ENCODE measurements at regions of chr11 and their contacts with region 1.

Region 1: DNA sequence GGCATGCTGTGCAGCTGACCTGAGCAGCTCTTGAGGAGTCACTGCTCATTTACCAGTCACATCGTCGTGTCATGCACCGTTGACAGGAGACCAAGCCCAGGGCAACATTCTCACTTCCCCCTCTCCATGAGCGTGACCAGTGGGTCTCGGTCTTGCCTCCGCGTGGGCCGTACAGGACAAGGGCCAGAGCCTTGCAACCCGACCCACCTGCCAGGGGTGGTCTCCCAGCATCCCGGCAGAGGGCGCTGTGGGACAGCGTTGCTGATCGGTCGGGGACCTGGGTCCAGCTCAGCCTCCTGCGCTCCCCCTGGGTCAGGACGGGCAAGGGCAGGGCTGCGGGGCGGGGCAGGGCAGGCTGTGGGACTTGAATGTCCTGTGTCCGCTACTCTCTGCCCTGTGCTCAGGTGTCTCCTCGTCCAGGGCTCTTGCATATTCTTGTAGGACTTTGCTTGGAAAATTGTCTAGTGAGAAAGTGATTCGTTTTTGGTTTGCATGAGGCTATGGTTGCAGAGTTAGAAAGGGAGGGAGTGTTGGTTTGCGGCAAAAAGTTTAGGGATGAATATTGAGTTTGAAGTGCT is 16.2 kb downstream of the EIF4G2 start:
- DNase-seq: peak; percentile 89
- CTCF ChIP-seq: peak; percentile 99

Region 2: DNA sequence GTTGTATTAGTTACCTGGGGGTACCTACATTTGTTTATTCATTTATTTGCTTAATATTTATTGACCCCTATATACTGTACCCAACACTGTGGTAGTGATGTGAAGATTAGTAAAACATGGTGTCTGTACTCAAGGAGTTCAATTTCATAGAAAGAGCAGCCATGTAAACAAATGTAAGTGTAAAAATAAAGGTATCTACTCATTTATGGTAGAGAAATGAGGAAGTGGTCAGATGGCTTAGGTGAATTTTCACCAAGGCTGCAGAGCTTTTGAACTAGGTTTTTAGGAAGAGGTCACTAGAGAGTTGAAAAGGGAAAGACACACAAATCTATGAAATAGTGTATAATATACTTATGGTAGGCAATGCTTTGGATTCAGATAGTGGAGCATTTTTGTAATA is 30.3 kb before region 1 on chr11:
- CTCF ChIA-PET with region 1: interaction called, 16 read pairs
- POLR2A ChIA-PET with region 1: interaction called, 3 read pairs
- DNase-seq: peak; percentile 53
- CTCF ChIP-seq: no peak

Region 3: DNA sequence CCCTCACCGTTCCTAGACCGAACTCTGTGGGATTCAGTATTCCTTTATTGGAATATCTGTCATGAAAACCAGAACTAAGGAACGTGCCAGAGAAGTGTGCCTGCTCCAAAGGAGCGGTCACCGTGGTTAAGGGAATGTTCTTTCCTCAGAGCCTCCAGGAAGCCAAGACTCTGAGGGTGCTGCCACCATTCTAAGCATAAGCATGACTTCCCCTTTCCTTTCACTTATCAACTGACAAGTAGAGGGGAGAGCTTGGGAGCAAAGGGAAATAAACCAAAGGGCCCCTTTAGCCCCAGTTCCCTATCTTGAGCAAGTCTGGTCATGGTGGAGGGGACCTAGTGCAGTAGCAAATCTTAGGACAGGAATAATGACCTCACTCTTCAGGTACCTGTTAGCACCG is 14.7 kb before region 1 on chr11:
- CTCF ChIA-PET with region 1: interaction called, 53 read pairs
- POLR2A ChIA-PET with region 1: no interaction called
- DNase-seq: no peak
- CTCF ChIP-seq: no peak

Region 4: DNA sequence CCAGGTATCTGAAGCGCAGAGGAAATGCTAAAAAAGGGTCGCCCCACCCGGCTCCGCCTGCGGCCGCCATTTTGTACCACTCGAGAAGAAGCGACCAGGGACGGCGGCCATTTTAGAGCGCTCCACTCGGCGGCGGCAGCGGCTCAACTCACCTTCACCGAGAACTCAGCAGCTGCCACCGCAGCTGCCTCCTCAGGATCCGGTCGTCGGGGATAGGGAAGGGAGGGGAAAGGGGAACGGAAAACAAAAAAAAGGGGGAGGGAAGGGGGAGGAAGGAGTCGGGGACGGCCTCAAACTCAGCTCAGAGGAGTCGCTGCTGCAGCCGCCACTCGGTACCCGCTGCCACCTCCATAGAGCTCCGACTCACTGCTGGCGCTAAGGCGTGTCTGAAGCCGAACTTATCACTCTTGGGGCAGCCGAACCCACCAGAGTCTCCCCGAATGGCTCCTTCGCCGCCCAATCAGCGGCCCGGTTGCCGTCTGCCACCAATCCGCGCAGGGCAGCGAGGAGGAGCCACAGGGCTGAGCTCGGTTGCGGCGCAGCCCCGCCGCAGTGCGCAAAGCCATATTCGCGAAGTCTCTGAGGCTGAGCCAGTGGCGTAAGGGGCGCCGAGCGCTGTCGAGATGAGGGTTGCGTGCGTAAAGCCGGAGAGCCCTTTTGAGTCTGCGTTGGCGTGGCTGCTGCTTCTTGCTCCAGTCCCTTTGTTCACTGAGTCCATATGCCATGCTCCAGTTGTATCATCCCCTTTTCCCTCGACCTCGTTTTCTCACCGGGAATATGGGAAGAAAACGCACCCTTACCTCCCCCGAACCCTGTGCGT is 16.3 kb after region 1 on chr11 and contains the start of gene EIF4G2:
- CTCF ChIA-PET with region 1: interaction called, 81 read pairs
- POLR2A ChIA-PET with region 1: interaction called, 79 read pairs
- DNase-seq: peak; percentile 99
- CTCF ChIP-seq: no peak

Region 5: GRCh38 chr11:10838083-10838482 is 45.6 kb after region 1 on chr11:
- CTCF ChIA-PET with region 1: no interaction called
- POLR2A ChIA-PET with region 1: no interaction called
- DNase-seq: no peak
- CTCF ChIP-seq: no peak

Region 6: GRCh38 chr11:10933455-10934292 is 141.2 kb after region 1 on chr11:
- CTCF ChIA-PET with region 1: interaction called, 13 read pairs
- POLR2A ChIA-PET with region 1: no interaction called
- DNase-seq: peak; percentile 79
- CTCF ChIP-seq: peak; percentile 89

Region 7: GRCh38 chr11:11022125-11022730 is 229.7 kb after region 1 on chr11:
- CTCF ChIA-PET with region 1: interaction called, 56 read pairs
- POLR2A ChIA-PET with region 1: no interaction called
- DNase-seq: peak; percentile 40
- CTCF ChIP-seq: peak; percentile 45

Region 8: GRCh38 chr11:11279956-11280689 is 487.6 kb after region 1 on chr11:
- CTCF ChIA-PET with region 1: no interaction called
- POLR2A ChIA-PET with region 1: no interaction called
- DNase-seq: no peak
- CTCF ChIP-seq: no peak

Measured in GM10248 (cell line).